Activated T-helper 2 cell treated with anti-CD3 and anti-CD28 coated beads, Interferon-gamma antibody, Interleukin-2, Interleukin-4, amounts not matched to agents 10 μg/mL and 5 μg/mL and 100 μg/mL, durations not matched to agents 14 hours and 24 hours and 36 hours (primary cell): ENCODE measurements at regions of chr3 and their contacts with region 1.

Region 1: GRCh38 chr3:58532794-58533220 is 4.2 kb downstream of the ACOX2 start:
- DNase-seq: peak; percentile 72
- H3K4me3 Mint-ChIP-seq: no peak overlapping the region
- H3K27ac Mint-ChIP-seq: no peak overlapping the region
- H3K4me1 Mint-ChIP-seq: peaks cover 19% of the 10 kb centered on the region
- H3K27me3 Mint-ChIP-seq: peaks cover 3% of the 10 kb centered on the region

Region 2: GRCh38 chr3:58177747-58178527 is 354.9 kb before region 1 on chr3:
- intact Hi-C with region 1: loop called (anchors 2 kb)
- DNase-seq: peak; percentile 80
- H3K4me3 Mint-ChIP-seq: peak overlapping the region; percentile 74
- H3K27ac Mint-ChIP-seq: no peak overlapping the region
- H3K4me1 Mint-ChIP-seq: peaks cover 18% of the 10 kb centered on the region
- H3K27me3 Mint-ChIP-seq: peaks cover 2% of the 10 kb centered on the region

Region 3: DNA sequence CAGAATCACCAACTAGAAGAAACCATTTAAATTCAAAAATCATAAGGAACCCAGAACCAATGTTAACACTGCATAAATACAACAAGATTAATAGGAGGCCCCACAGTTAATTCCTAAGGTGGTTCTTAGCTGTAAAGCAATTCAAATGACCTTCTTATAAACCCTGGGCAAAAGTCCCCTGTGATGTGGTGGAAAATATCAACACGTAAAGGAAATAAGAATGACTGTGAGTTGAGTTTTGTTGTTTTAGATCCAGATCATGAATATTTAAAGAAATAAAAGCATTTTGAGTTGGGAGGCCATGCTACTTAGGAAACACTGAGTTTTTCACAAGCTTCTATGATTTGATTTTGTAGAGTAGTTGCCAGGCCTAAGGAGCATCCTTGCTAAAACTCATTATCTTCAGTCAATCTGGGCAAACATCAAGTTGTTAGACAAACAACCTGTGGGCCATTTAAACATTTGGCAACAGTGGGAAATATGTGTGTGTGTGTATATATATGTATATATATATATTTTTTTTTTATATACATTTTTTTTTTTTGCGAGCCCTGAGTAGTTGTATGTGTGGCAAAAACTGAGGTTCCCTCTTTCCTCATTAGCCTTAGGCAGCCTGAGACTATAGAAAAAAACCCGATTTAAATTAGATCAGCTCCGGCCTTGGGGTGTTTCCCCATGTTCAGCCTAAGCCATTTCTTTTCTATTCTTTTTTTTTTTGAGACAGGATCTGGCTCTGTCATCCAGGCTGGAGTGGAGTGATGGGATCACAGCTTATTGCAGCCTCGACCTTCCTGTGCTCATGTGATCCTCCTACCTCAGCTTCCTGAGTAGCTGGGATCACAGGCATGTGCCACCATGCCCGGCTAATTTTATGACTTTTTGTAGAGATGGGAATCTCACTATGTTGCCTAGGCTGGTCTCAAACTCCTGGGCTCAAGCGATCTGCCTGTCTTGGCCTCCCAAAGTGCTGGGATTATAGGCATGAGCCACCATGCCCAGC is 208.1 kb before region 1 on chr3:
- intact Hi-C with region 1: loop called (anchors 2 kb)
- DNase-seq: no peak
- H3K4me3 Mint-ChIP-seq: peak overlapping the region; percentile 50
- H3K27ac Mint-ChIP-seq: peak overlapping the region; percentile 93
- H3K4me1 Mint-ChIP-seq: peaks cover 39% of the 10 kb centered on the region
- H3K27me3 Mint-ChIP-seq: no peaks in the 10 kb centered on the region

Region 4: DNA sequence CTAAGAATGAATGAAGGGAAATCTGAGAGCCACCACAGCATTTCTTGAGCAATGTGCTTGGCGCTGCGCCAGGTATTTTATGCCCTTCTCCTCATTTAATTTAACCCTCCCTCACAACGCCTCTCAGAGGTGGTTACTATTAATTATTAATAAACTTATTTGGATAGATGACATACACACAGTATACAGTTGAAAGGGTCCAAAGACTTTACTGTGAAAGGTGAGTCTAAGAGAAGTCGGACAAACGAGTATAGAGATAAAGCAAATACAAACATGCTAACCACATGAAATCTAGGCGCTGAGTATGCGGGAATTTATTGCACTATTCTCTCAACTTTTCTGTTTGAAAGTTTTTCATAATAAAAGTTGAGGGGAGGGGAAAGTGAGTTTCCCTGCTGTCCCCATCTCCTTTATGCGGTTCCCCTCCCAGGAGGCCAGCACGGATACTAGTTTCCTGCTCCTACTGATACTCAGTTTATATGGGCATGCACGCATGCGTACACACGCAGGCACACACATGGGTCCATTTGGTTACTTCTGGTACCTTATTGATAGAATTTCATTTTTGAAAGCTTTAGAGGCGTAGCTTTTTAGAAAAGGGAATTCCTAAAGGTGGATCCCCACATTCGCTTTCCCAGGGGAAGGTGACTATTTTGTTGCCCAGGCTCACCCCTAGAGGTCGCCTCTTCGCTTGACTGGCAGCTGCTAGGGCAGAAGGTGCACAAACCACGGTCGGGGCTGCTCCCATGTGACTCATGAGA is 69.4 kb before region 1 on chr3:
- intact Hi-C with region 1: loop called (anchors 1 kb)
- DNase-seq: peak; percentile 61
- H3K4me3 Mint-ChIP-seq: no peak overlapping the region
- H3K27ac Mint-ChIP-seq: no peak overlapping the region
- H3K4me1 Mint-ChIP-seq: peaks cover 19% of the 10 kb centered on the region
- H3K27me3 Mint-ChIP-seq: peaks cover 4% of the 10 kb centered on the region

Region 5: GRCh38 chr3:58491506-58492402 is 41.1 kb before region 1 on chr3 and contains the start of gene KCTD6:
- intact Hi-C with region 1: loop called (anchors 1 kb)
- DNase-seq: peak; percentile 87
- H3K4me3 Mint-ChIP-seq: peak within 1 kb of the TSS; percentile 96
- H3K27ac Mint-ChIP-seq: peak within 1 kb of the TSS; percentile 84
- H3K4me1 Mint-ChIP-seq: peaks cover 37% of the 10 kb centered on the region
- H3K27me3 Mint-ChIP-seq: peaks cover 35% of the 10 kb centered on the region
- total RNA-seq, gene KCTD6: 7.2 and 8.7 TPM in 2 replicates

Region 6: GRCh38 chr3:58502872-58503271 is 29.9 kb before region 1 on chr3:
- intact Hi-C with region 1: no loop called
- DNase-seq: no peak
- H3K4me3 Mint-ChIP-seq: no peak overlapping the region
- H3K27ac Mint-ChIP-seq: no peak overlapping the region
- H3K4me1 Mint-ChIP-seq: no peaks in the 10 kb centered on the region
- H3K27me3 Mint-ChIP-seq: no peaks in the 10 kb centered on the region

Region 7: DNA sequence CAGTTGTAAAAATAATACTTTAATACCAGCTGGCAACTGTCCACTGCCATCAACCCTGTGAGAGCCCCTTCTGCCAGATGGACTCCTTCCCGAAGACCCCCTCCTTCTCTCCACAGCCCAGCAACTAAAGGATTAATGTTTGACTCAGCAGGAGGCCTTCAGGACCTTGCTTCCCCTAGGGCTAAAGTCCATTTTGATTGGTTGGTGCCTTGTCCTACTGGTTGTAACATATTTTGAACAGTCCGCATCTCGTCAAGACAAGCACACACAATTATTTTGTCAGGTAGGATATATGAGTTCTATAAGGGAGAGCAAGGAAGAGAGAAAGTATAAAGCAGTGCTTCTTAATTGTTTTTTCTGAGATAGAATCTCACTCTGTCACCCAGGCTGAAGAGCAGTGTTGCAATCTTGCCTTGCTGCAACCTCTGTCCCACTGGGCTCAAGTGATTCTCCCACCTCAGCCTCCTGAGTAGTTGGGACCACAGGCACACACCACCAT is 14.5 kb before region 1 on chr3:
- intact Hi-C with region 1: no loop called
- DNase-seq: no peak
- H3K4me3 Mint-ChIP-seq: no peak overlapping the region
- H3K27ac Mint-ChIP-seq: no peak overlapping the region
- H3K4me1 Mint-ChIP-seq: no peaks in the 10 kb centered on the region
- H3K27me3 Mint-ChIP-seq: peaks cover 5% of the 10 kb centered on the region